Gastrocnemius medialis (tissue), 4 donors: ENCODE measurements at regions of chr1 and their contacts with region 1.

Region 1: DNA sequence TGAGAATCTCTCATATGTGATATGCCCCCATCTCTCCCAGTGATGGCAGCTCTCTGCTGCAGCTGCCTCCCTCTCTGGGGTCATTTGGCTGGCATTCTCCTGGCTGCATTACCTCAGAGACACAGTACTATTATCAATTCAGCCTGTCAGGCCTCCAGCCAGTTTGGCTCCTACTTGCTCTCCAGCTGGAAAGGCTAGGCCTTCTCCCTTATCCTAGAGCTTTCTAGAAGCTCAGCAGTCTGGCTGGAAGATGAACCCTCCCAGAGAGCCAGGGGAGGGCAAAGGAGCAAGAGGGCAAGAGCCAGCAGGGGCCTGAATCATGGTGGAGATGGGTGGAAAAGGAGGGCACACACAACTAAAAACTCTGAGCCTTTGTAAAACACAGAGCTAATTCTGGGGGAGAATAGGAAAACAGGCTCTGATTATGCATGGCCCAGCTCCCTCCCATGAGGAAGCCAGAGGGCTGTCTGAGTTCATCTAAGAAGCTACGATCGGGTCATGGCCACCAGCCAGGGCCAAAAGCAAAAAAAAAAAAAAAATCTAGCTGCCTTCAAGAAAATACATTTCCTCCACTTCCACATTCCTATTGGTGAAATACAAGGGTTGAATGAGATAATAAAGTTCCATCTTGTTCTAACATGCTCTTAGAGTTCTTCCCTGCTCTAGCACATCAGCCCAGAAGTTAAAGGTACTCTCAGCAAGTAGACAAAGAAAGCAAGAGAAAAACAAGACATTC is 8.8 kb downstream of the LAMB3 start:
- DNase-seq: peak in 1 of 2 donors; percentile 68
- ATAC-seq: peak in 1 of 2 donors; percentile 25
- H3K4me3 ChIP-seq: no peak overlapping the region
- H3K27ac ChIP-seq: peak overlapping the region; percentile 88 to 96 (median 96)
- H3K4me1 ChIP-seq: peaks cover 67% of the 10 kb centered on the region in 2 donors
- H3K27me3 ChIP-seq: no peaks in the 10 kb centered on the region
- CTCF ChIP-seq: no peak
- POLR2A ChIP-seq: no peak

Region 2: DNA sequence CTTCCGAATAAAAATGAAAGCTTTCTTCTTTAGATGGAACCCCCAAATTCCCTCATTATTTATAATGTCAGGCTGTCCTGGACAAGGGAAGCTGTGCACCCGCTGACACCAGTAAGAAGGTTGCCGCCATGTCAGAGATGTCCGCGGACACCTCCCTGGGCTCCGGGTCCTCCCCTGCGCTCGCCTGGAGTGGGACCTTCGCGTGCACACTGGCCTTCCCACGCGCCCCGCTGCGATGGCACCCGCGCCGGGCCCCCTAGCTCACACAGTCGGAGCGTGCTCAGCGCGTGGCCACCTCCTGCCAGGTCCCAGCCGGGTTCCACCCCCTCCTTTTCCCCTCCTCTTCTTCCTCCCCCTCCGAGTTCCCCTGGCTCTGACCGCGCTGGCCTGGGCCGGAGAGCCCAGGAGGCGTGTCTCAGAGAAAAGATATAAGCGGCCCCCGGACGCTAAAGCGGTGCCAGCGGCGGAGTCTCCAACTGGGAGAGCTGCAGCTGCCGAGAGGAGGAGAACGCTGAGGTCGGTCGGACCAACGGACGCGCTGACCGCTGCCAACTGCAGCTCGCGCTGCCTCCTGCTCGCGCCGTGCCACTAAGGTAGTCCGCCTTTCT is 31.6 kb after region 1 on chr1 and contains the start of gene G0S2:
- in situ Hi-C with region 1: loop called in 2 of 4 experiments (anchors 10 kb)
- intact Hi-C with region 1: loop called (anchors 2 kb)
- DNase-seq: peak; percentile 77 to 96
- ATAC-seq: peak; percentile 49 to 67
- H3K4me3 ChIP-seq: peak within 1 kb of the TSS; percentile 69 to 78 (median 73)
- H3K27ac ChIP-seq: peak within 1 kb of the TSS; percentile 95 to 96 (median 95)
- H3K4me1 ChIP-seq: peaks cover 58 to 59% of the 10 kb centered on the region in 2 donors
- H3K27me3 ChIP-seq: no peaks in the 10 kb centered on the region
- CTCF ChIP-seq: no peak
- POLR2A ChIP-seq: peak; percentile 81 to 95
- total RNA-seq, gene G0S2: 29.1 to 1,155 (median 83.4) TPM